Endothelial cell of umbilical vein (primary cell): ENCODE measurements at regions of chr2 and their contacts with region 1.

Region 1: DNA sequence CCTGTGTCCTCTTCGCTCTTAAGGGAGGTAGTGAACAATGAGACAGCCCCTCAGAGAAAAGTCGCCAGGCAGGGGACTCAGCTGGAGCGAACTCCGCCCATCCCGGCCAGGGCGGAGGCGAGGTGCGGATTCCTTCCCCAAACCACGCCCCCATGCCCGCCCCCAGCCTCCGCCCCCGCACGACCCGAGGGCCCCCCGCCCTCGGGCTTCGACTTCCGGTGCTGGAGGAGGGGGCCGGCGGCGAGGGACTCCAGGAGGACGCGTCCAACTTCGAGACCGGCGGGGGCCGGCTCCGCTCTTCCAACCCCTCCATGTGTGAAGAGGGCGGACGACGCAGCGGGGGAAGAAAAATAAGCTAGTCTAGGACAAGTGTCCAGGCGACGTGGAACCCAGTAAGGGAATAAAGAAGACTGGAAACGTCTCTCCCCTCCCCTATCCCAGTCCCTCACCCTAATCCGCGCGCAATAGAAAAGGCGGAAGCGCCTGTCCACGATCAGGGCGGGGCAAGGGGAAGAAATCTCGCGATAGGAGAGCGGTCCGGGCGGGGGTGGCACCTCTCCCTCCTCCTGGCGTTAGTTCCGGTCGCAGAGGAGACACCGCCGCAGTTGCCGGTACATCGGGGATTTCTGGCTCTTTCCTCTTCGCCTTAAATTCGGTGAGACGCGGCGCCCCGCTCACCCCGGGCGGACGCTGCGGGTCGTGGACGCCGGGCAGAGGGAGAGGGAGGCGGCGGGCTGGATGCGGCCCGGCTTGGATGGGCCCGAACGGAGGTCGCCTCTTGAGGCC is at the start of gene BZW1:
- DNase-seq: peak; percentile 95
- H3K4me3 ChIP-seq: peak within 1 kb of the TSS; percentile 76 to 99 (median 96)
- H3K27ac ChIP-seq: peak within 1 kb of the TSS; percentile 98
- H3K4me1 ChIP-seq: peaks cover 34% of the 10 kb centered on the region
- H3K27me3 ChIP-seq: no peaks in the 10 kb centered on the region
- CTCF ChIP-seq: no peak
- POLR2A ChIP-seq: peak; percentile 69
- total RNA-seq, gene BZW1: 347 and 353 TPM in 2 replicates

Region 2: GRCh38 chr2:200742426-200742825 is 69.1 kb before region 1 on chr2:
- CTCF ChIA-PET with region 1: interaction called, 4 read pairs
- POLR2A ChIA-PET with region 1: no interaction called
- dilution Hi-C with region 1: no loop called
- intact Hi-C with region 1: loop called (anchors 1 kb)
- DNase-seq: peak; percentile 81
- H3K4me3 ChIP-seq: no peak overlapping the region
- H3K27ac ChIP-seq: no peak overlapping the region
- H3K4me1 ChIP-seq: peaks cover 9% of the 10 kb centered on the region
- H3K27me3 ChIP-seq: no peaks in the 10 kb centered on the region
- CTCF ChIP-seq: no peak
- POLR2A ChIP-seq: no peak

Region 3: DNA sequence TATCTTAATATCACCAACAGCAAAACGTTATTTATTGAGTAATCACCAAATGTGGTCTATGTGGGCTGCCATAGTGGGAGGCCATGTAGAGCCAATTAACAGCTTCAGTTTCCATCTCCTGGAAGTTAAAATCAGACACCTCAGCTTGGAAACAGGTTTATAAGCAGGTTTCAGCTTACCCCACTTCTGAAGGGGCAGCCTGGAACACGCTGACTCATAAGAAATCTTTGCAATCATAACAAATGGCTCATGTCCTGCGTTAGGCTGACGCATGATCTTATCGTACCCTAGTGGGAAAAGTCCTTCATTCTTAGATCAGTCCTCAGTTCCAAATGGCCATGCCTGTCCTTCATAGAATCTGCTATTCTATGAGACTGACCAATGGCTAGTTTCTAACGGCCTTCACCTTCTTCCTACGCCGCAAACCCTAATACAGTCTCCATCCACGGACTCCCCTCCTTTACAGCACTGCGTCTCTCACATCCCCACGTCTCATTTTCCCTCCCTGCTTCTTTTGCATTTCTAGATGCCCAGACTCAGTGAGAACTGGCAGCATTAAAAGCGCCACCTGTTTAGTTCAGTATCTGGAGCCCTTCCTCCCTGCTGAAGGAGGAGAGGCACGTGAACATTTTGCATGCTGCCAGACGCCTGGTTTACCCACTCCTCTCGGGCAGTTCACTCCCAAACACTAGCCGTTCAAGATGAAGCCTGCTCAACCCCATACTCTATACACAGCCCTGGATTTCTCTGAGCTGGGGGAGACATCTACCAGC is 24.0 kb before region 1 on chr2:
- CTCF ChIA-PET with region 1: interaction called, 7 read pairs
- POLR2A ChIA-PET with region 1: interaction called, 3 read pairs
- dilution Hi-C with region 1: no loop called
- intact Hi-C with region 1: loop called (anchors 1 kb)
- DNase-seq: peak; percentile 95
- H3K4me3 ChIP-seq: peak overlapping the region in 1 of 3 experiments; percentile 63
- H3K27ac ChIP-seq: peak overlapping the region; percentile 99
- H3K4me1 ChIP-seq: peaks cover 43% of the 10 kb centered on the region
- H3K27me3 ChIP-seq: no peaks in the 10 kb centered on the region
- CTCF ChIP-seq: no peak
- POLR2A ChIP-seq: peak; percentile 17

Region 4: GRCh38 chr2:200864176-200864976 is 52.8 kb after region 1 on chr2 and contains the start of gene CLK1:
- CTCF ChIA-PET with region 1: no interaction called
- POLR2A ChIA-PET with region 1: interaction called, 3 read pairs
- dilution Hi-C with region 1: no loop called
- intact Hi-C with region 1: loop called (anchors 1 kb)
- DNase-seq: peak; percentile 95
- H3K4me3 ChIP-seq: peak within 1 kb of the TSS; percentile 90 to 99 (median 91)
- H3K27ac ChIP-seq: peak within 1 kb of the TSS; percentile 88
- H3K4me1 ChIP-seq: peaks cover 26% of the 10 kb centered on the region
- H3K27me3 ChIP-seq: no peaks in the 10 kb centered on the region
- CTCF ChIP-seq: no peak
- POLR2A ChIP-seq: peak; percentile 97
- total RNA-seq, gene CLK1: 79.7 and 92.4 TPM in 2 replicates

Region 5: DNA sequence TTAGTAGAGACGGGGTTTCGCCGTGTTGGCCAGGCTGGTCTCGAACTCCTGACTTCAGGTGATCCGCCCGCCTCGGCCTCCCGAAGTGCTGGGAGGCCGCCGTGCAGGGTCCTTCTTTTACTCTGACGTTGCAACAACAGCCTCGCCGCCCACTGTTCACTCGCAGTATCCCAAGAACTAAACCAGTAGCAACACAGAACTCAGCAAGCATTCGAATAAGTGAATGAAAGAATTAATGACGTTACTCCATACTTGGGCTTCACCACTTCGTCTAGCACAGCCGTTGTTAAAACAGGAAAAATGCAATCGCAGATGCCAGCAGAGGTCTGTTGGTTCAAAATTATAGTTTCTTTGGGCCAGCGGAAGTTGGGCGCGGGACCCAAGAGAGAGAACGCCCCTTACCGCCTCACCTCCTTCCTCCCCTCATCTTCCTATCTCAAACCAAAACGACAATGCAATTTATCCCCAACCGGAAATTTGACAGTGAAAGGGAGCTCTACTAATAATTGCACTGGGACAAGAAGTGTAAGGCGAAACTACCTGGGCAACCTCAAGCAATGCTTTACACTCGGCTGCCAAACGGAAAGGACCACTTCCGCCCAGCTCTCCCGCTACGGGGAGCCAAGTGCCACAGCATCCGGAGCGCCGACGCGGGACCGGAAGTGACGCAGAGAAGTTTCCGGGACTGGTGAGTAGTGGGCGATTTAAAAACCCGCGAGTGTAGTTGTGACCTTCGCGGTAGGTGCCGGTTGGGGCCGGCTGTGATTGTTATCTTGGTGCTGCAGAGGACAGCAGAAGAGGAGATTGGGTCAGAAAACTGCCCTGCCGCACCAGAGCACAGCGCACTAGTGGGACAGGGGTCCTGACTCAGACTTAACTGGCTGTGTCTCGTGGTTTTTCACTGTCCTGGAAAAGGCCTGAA is 77.4 kb after region 1 on chr2 and contains the starts of genes NIF3L1 and PPIL3:
- CTCF ChIA-PET with region 1: no interaction called
- POLR2A ChIA-PET with region 1: no interaction called
- dilution Hi-C with region 1: no loop called
- intact Hi-C with region 1: loop called (anchors 1 kb)
- DNase-seq: peak; percentile 96
- H3K4me3 ChIP-seq: peak within 1 kb of the TSS; percentile 24 to 76 (median 63)
- H3K27ac ChIP-seq: peak within 1 kb of the TSS; percentile 91
- H3K4me1 ChIP-seq: peaks cover 13% of the 10 kb centered on the region
- H3K27me3 ChIP-seq: no peaks in the 10 kb centered on the region
- CTCF ChIP-seq: peak in 1 of 2 donors; percentile 11
- POLR2A ChIP-seq: peak; percentile 82
- total RNA-seq, gene NIF3L1: 14.9 and 16.3 TPM in 2 replicates
- total RNA-seq, gene PPIL3: 25.0 and 28.7 TPM in 2 replicates